Panc1 (cell line): ENCODE measurements at regions of chr4 and their contacts with region 1.

Region 1: GRCh38 chr4:86497980-86498862 is 95.9 kb upstream of the PTPN13 start:
- DNase-seq: peak; percentile 32
- ATAC-seq: peak; percentile 82
- H3K4me3 ChIP-seq: no peak overlapping the region
- H3K27ac ChIP-seq: no peak overlapping the region
- H3K4me1 ChIP-seq: no peaks in the 10 kb centered on the region
- H3K27me3 ChIP-seq: no peaks in the 10 kb centered on the region; the same call in 1 of the 2 replicates
- CTCF ChIP-seq: peak; percentile 70; the same call in 1 of the 2 replicates

Region 2: DNA sequence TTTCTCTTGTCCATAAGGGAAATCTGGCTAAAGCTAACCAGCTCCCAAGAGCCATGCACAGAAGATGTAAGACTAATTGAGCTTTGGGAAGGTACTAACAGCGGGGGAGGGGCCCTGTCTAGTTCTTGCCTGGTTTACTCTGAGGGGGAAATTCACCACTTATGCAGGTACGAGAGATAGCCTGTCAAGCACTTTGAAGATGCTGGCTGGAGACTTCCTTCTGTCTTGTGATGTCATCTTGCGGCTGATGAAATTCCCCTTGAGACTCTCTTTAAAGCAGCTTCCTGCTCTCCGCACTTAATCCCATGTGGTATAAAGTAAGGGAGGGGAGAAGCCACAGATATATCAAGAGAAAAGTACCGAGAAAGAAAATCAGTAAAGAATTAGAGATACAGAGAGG is 483.6 kb before region 1 on chr4:
- CTCF ChIA-PET with region 1: no interaction called
- POLR2A ChIA-PET with region 1: no interaction called
- in situ Hi-C with region 1: no loop called
- intact Hi-C with region 1: no loop called
- DNase-seq: no peak
- ATAC-seq: no peak
- H3K4me3 ChIP-seq: no peak overlapping the region
- H3K27ac ChIP-seq: no peak overlapping the region
- H3K4me1 ChIP-seq: no peaks in the 10 kb centered on the region
- H3K27me3 ChIP-seq: no peaks in the 10 kb centered on the region
- CTCF ChIP-seq: no peak

Region 3: GRCh38 chr4:86058621-86059020 is 439.6 kb before region 1 on chr4:
- CTCF ChIA-PET with region 1: no interaction called
- POLR2A ChIA-PET with region 1: no interaction called
- in situ Hi-C with region 1: no loop called
- intact Hi-C with region 1: no loop called
- DNase-seq: no peak
- ATAC-seq: no peak
- H3K4me3 ChIP-seq: no peak overlapping the region
- H3K27ac ChIP-seq: no peak overlapping the region
- H3K4me1 ChIP-seq: no peaks in the 10 kb centered on the region
- H3K27me3 ChIP-seq: peaks cover under 1% of the 10 kb centered on the region; the same call in 1 of the 2 replicates
- CTCF ChIP-seq: no peak

Region 4: DNA sequence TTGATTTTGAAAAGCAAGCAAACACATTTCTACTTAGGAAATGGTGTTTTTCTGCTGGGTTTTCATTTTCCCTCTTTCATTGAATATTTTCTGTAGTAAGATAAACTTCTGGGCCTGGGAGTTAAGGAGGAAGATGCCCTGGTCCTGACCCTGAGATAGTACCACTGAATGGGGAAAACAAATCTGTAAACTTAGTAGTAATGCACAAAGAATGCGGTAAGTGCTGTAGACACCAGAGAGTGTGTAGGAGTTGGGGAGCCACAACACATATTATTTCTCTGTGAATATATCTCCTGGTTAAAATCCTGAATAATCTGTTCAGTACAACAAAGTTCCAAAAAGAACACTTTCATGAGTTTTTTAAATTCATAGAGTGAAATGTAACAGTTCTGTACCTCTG is 316.6 kb before region 1 on chr4:
- CTCF ChIA-PET with region 1: no interaction called
- POLR2A ChIA-PET with region 1: interaction called, 13 read pairs
- in situ Hi-C with region 1: no loop called
- intact Hi-C with region 1: no loop called
- DNase-seq: no peak
- ATAC-seq: no peak
- H3K4me3 ChIP-seq: no peak overlapping the region
- H3K27ac ChIP-seq: no peak overlapping the region
- H3K4me1 ChIP-seq: no peaks in the 10 kb centered on the region
- H3K27me3 ChIP-seq: no peaks in the 10 kb centered on the region
- CTCF ChIP-seq: no peak

Region 5: DNA sequence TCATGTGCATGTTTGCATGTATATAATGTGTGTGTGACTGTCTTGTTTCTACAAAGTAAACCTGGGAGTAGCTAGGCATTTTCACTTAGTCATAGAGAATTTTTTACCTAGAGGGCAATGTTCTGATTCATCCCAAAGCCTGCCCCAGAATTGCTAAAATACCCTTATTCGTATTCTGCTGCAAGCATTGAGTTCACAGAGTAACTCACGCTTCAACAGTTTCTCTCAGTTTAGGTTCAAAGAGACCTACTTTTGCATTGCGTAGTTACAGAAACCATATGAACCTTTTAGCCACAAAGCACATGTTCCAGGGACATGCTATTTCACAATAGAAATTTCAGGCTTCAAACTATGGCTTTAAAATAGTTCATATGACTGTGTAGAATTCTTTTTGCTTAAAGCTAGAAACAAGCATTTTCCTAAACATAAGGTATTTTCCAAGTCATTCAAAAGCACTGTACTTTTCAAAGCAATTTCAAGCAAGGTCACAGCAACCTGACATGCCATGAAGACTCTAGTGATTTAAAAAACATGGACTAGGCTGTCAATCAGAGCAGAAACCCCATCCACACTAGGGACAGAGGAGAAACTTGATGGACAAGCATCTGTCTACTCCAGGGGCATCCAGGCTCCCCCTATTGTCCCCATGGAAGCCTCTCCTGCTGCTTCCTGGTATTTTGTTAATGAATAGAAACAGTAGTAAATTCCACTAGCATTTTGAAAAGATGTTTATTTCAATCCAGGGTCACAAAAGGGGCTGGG is 56.9 kb before region 1 on chr4:
- CTCF ChIA-PET with region 1: no interaction called
- POLR2A ChIA-PET with region 1: no interaction called
- in situ Hi-C with region 1: no loop called
- intact Hi-C with region 1: no loop called
- DNase-seq: no peak
- ATAC-seq: no peak
- H3K4me3 ChIP-seq: no peak overlapping the region
- H3K27ac ChIP-seq: no peak overlapping the region
- H3K4me1 ChIP-seq: no peaks in the 10 kb centered on the region
- H3K27me3 ChIP-seq: no peaks in the 10 kb centered on the region
- CTCF ChIP-seq: no peak

Region 6: GRCh38 chr4:86615501-86615900 is 117.3 kb after region 1 on chr4:
- CTCF ChIA-PET with region 1: no interaction called
- POLR2A ChIA-PET with region 1: no interaction called
- in situ Hi-C with region 1: no loop called
- intact Hi-C with region 1: no loop called
- DNase-seq: no peak
- ATAC-seq: no peak
- H3K4me3 ChIP-seq: no peak overlapping the region
- H3K27ac ChIP-seq: no peak overlapping the region
- H3K4me1 ChIP-seq: no peaks in the 10 kb centered on the region; the same call in 1 of the 2 replicates
- H3K27me3 ChIP-seq: no peaks in the 10 kb centered on the region
- CTCF ChIP-seq: no peak

Region 7: GRCh38 chr4:86895692-86896488 is 397.7 kb after region 1 on chr4:
- CTCF ChIA-PET with region 1: interaction called, 5 read pairs
- POLR2A ChIA-PET with region 1: no interaction called
- in situ Hi-C with region 1: no loop called
- intact Hi-C with region 1: loop called (anchors 1 kb)
- DNase-seq: peak; percentile 38
- ATAC-seq: no peak; the same call in 1 of the 2 replicates
- H3K4me3 ChIP-seq: no peak overlapping the region
- H3K27ac ChIP-seq: no peak overlapping the region
- H3K4me1 ChIP-seq: peaks cover 2% of the 10 kb centered on the region; the same call in 1 of the 2 replicates
- H3K27me3 ChIP-seq: no peaks in the 10 kb centered on the region
- CTCF ChIP-seq: peak; percentile 52; the same call in 1 of the 2 replicates

Region 8: DNA sequence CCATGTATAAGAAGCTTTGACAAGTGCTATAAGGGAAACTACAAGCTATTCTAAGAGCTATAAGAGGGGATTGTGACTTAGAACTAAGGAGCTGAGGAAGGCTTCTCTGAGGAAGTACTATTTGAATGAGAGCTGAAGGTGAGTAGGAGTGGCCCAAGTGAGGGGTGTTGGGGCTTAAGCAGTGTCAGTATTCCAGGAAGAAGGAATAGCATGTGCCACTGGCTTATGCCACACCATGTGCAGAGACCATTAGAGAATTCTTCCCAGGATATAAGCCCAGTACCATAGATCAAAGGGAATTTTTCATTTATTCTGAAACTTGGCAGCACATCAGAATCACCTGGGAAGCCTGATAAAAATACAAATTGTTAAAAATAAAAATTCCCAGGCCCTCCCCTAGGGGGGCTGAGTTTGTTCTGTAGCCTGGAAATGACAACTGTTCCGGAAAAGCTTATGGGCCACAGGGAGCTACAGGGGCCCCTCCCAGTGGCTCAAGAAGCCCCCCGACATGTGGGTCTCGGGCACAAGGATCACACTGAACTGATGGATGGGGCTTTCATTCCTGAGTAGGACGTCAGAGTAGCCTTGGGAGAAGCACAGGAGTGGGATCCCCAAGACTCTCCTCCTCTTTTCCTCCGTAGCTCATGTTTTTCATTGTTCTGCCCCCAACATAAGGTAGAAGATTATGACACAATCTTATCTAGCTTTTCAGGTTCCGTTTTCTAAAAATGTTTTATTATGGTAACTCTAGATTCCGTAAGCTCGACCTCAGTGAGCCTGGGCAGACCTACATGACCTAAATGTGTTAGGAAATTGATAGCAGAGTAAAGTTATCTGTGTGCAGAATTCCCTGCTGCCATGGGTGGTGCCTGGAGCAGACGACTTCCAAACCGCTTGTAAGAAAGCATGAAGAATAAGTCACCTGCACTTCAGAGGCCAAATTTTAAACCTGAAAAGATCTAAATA is 555.9 kb after region 1 on chr4:
- CTCF ChIA-PET with region 1: interaction called, 10 read pairs
- POLR2A ChIA-PET with region 1: no interaction called
- in situ Hi-C with region 1: no loop called
- intact Hi-C with region 1: no loop called
- DNase-seq: no peak
- ATAC-seq: no peak
- H3K4me3 ChIP-seq: no peak overlapping the region
- H3K27ac ChIP-seq: no peak overlapping the region
- H3K4me1 ChIP-seq: no peaks in the 10 kb centered on the region; the same call in 1 of the 2 replicates
- H3K27me3 ChIP-seq: no peaks in the 10 kb centered on the region
- CTCF ChIP-seq: no peak